Activated CD4-positive, alpha-beta memory T cell treated with anti-CD3 and anti-CD28 coated beads for 36 hours (primary cell): ENCODE measurements at regions of chr12 and their contacts with region 1.

Region 1: GRCh38 chr12:71392521-71393145 is 47.0 kb upstream of the LGR5 start:
- DNase-seq: no peak
- H3K4me3 Mint-ChIP-seq: no peak overlapping the region
- H3K27ac Mint-ChIP-seq: no peak overlapping the region
- H3K4me1 Mint-ChIP-seq: no peaks in the 10 kb centered on the region
- H3K27me3 Mint-ChIP-seq: peaks cover 6% of the 10 kb centered on the region

Region 2: DNA sequence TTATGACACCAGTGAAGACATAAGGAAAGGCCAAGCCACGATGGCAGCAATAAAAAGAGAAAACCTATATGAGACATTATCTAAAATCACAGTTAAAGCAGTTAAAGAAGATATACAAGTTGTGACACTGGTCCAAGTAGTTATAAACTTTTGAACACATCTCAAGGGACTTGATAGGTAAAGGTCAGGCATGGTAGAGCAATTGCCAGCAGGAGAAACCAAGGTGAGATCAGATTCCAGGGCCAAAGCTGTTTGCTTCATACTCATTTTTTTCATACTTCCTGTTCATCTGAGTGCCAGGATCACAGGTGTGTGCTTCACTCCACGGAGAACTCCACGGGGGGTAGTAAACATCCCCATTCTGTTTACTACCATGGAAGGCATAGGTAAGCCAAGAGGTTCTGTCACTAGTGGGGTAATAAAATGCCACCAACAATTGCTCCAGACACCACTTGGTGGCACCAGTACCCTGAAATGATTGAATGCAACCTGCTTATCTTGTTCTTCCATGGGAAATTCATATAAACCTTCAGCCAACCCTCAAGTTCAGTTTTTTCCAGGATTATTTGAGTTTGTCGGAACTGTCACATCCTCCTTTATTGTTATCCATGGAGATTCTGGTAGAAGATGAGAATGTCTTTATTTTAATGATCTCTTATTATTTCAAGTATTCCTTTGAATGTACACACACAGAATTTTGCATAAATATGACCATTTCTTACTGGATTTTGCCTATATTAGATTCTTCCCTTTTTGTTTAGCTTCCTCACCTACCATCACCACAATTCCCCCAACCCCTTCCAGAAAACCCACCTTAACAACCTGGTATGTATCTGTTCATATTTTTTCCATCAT is 175.7 kb before region 1 on chr12:
- CTCF ChIA-PET with region 1: no interaction called
- POLR2A ChIA-PET with region 1: no interaction called
- intact Hi-C with region 1: loop called (anchors 5 kb)
- DNase-seq: no peak
- H3K4me3 Mint-ChIP-seq: no peak overlapping the region
- H3K27ac Mint-ChIP-seq: no peak overlapping the region
- H3K4me1 Mint-ChIP-seq: no peaks in the 10 kb centered on the region
- H3K27me3 Mint-ChIP-seq: no peaks in the 10 kb centered on the region

Region 3: DNA sequence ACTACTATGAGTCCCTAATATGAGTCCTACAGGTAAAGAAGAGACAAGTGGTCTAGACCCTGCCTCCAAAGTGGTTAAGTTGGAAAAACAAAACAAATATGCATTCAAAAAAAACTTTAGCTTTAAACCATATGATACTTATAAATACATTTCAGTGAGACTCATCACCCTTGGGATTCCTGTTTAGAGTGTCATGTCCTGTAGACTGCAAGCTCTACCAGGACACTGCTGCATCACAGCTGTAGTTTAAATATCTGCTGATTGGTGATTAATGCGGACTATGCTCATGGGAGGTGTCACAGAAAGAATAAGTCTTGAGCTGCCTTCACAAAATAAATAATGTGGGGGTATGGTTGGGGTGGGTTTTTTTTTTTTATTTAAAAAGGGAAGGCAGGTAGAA is 38.1 kb after region 1 on chr12:
- CTCF ChIA-PET with region 1: no interaction called
- POLR2A ChIA-PET with region 1: no interaction called
- intact Hi-C with region 1: no loop called
- DNase-seq: no peak
- H3K4me3 Mint-ChIP-seq: no peak overlapping the region
- H3K27ac Mint-ChIP-seq: no peak overlapping the region
- H3K4me1 Mint-ChIP-seq: no peaks in the 10 kb centered on the region
- H3K27me3 Mint-ChIP-seq: peaks cover 36% of the 10 kb centered on the region